ENCODE measurements at regions of chr21 and their contacts with region 1.

Region 1: DNA sequence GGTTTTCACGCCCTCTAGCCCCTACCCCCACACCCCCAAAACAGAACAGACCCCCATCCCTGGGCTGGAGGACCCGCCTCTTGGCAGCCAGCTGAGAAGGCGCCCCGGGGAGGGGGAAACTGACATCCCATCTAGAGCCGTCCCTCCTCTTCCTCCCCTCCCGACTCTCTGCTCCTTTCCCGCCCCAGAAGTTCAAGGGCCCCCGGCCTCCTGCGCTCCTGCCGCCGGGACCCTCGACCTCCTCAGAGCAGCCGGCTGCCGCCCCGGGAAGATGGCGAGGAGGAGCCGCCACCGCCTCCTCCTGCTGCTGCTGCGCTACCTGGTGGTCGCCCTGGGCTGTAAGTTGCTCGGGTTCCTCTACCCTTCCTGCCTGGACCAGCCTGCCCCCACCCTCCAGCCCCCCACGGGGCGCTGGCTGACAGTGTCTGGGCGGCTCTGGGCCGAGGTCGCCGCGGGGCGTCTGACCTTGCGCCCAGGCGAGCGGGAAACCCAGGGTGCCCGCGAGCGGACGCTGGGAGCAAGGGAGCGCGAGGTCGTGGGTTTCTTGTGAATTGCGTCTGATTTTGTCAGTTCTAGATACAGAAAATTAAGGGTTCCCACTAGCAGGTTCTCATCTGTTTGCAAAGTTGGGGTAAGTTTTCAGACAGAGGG is 618 bp downstream of the JAM2 start:
- DNase-seq: peak; percentile 36 to 52 (median 42)
- H3K4me3 ChIP-seq: peak overlapping the region; percentile 1 to 55
- H3K4me3 Mint-ChIP-seq: peak overlapping the region; percentile 72 to 87 (median 82)
- H3K27ac ChIP-seq: no peak overlapping the region
- H3K27ac Mint-ChIP-seq: peak overlapping the region in 1 of 7 donors; percentile 20
- H3K4me1 ChIP-seq: peaks cover 18% of the 10 kb centered on the region
- H3K4me1 Mint-ChIP-seq: peaks cover 9 to 20% (median 13%) of the 10 kb centered on the region in 4 donors
- H3K27me3 ChIP-seq: peaks cover 16% of the 10 kb centered on the region
- H3K27me3 Mint-ChIP-seq: peaks cover 22 to 26% of the 10 kb centered on the region in 2 donors

Region 2: DNA sequence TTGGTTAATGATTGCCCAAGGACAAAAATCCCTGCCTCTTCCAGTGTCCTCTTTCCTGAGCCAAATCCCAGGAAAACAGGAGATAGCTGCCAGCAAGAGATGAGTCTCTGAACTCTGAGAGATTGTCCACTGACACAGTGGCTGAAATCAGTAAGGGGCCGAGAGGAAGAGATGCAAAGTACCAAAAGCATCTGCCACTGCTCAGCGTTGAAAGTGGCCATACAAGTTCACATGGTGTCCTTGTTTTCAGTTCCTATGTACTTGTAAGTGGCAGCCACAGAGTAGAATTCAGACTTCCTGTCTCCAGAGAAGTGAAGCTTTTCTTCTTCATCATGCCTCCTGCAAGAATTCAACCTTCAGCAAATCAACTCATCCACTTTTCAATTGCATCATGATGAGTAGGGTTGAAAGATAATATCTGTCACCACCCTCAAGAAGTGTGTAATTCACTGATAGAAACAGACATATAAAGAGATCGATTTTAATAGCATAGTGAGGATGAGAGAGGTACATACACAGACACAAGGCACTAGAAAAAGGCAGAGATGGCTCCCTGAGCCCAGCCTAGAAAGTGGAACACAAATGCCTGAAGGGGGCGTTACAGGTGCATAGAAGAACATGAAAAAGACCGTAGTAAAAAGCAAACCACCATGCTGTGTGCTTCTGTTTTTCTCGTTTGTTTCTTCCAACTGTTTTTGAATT is 218.2 kb before region 1 on chr21:
- CTCF ChIA-PET with region 1: no interaction called
- POLR2A ChIA-PET with region 1: no interaction called
- intact Hi-C with region 1: loop called (anchors 1 kb)
- DNase-seq: peak; percentile 63 to 69 (median 63)
- H3K4me3 ChIP-seq: no peak overlapping the region
- H3K4me3 Mint-ChIP-seq: peak overlapping the region in 6 of 8 donors; percentile 1 to 81 (median 36)
- H3K27ac ChIP-seq: peak overlapping the region; percentile 7
- H3K27ac Mint-ChIP-seq: peak overlapping the region; percentile 29 to 89 (median 54)
- H3K4me1 ChIP-seq: peaks cover 11% of the 10 kb centered on the region
- H3K4me1 Mint-ChIP-seq: peaks cover 6 to 11% (median 9%) of the 10 kb centered on the region in 4 donors
- H3K27me3 ChIP-seq: no peaks in the 10 kb centered on the region
- H3K27me3 Mint-ChIP-seq: no peaks in the 10 kb centered on the region

Region 3: DNA sequence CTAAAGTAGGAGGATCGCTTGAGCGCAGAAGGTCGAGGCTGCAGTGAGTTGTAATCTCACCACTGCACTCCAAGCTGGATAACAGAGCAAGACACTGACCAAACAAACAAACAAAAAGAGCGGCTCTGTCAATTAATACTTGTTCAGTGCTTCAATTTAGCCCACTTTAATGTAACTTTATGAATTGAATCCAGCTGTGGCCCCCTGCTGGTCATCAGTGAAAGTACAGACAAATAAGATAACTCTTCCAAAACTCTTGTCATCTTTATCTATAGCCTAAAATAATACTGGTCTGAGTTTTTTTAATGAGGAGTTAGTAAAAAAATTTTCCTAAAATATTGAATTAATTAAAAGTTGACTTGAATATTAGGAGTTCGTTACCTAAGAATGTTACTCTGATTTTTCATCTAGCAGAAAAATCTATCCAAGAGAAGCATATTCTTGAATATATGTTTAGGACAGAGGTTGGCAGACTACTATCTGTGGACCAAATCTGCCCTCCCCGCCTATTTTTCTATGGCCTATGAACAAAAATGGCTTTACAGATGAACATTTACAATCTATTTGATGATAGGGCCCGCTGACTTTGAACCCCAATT is 68.9 kb after region 1 on chr21:
- CTCF ChIA-PET with region 1: no interaction called
- POLR2A ChIA-PET with region 1: no interaction called
- intact Hi-C with region 1: loop called (anchors 2 kb)
- DNase-seq: peak in 4 of 5 donors; percentile 38 to 48 (median 46)
- H3K4me3 ChIP-seq: no peak overlapping the region
- H3K4me3 Mint-ChIP-seq: no peak overlapping the region
- H3K27ac ChIP-seq: no peak overlapping the region
- H3K27ac Mint-ChIP-seq: no peak overlapping the region
- H3K4me1 ChIP-seq: no peaks in the 10 kb centered on the region
- H3K4me1 Mint-ChIP-seq: no peaks in the 10 kb centered on the region
- H3K27me3 ChIP-seq: no peaks in the 10 kb centered on the region
- H3K27me3 Mint-ChIP-seq: no peaks in the 10 kb centered on the region

Region 4: GRCh38 chr21:26614251-26614650 is 974.6 kb after region 1 on chr21:
- CTCF ChIA-PET with region 1: no interaction called
- POLR2A ChIA-PET with region 1: no interaction called
- intact Hi-C with region 1: no loop called
- DNase-seq: no peak
- H3K4me3 ChIP-seq: no peak overlapping the region
- H3K4me3 Mint-ChIP-seq: no peak overlapping the region
- H3K27ac ChIP-seq: no peak overlapping the region
- H3K27ac Mint-ChIP-seq: no peak overlapping the region
- H3K4me1 ChIP-seq: no peaks in the 10 kb centered on the region
- H3K4me1 Mint-ChIP-seq: no peaks in the 10 kb centered on the region
- H3K27me3 ChIP-seq: no peaks in the 10 kb centered on the region
- H3K27me3 Mint-ChIP-seq: peaks cover 0 to 4% of the 10 kb centered on the region in 2 donors

Measured in CD4-positive, alpha-beta memory T cell (primary cell).